ENCODE measurements at regions of chr3 and their contacts with region 1.

Region 1: GRCh38 chr3:39707314-39707909 is 102.0 kb upstream of the MYRIP start:
- DNase-seq: peak; percentile 59
- H3K4me3 Mint-ChIP-seq: no peak overlapping the region
- H3K27ac Mint-ChIP-seq: no peak overlapping the region
- H3K4me1 Mint-ChIP-seq: no peaks in the 10 kb centered on the region
- H3K27me3 Mint-ChIP-seq: peaks cover 5% of the 10 kb centered on the region

Region 2: GRCh38 chr3:39879581-39879980 is 172.2 kb after region 1 on chr3:
- intact Hi-C with region 1: no loop called
- DNase-seq: no peak
- H3K4me3 Mint-ChIP-seq: no peak overlapping the region
- H3K27ac Mint-ChIP-seq: no peak overlapping the region
- H3K4me1 Mint-ChIP-seq: no peaks in the 10 kb centered on the region
- H3K27me3 Mint-ChIP-seq: no peaks in the 10 kb centered on the region

Region 3: DNA sequence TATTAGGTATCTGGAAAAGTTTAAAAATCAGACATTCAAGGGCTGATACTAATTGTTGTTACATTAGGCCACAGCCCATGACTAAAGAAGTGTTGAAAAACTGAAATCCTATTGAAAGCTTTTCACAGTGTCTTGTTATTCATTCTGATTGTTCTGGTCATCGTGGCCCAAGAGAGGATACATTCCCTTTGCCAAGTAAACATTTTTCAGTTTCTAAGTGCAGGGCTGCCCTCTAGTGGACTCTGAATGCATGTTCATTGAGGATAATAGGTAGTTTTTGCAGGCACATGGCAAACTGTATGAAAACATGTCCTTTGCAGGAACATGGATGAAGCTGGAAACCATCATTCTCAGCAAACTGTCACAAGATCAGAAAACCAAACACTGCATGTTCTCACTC is 283.1 kb after region 1 on chr3:
- intact Hi-C with region 1: loop called (anchors 1 kb)
- DNase-seq: peak; percentile 70
- H3K4me3 Mint-ChIP-seq: no peak overlapping the region
- H3K27ac Mint-ChIP-seq: no peak overlapping the region
- H3K4me1 Mint-ChIP-seq: no peaks in the 10 kb centered on the region
- H3K27me3 Mint-ChIP-seq: no peaks in the 10 kb centered on the region

Region 4: GRCh38 chr3:40179016-40179415 is 471.6 kb after region 1 on chr3:
- intact Hi-C with region 1: loop called (anchors 5 kb)
- DNase-seq: peak; percentile 83
- H3K4me3 Mint-ChIP-seq: no peak overlapping the region
- H3K27ac Mint-ChIP-seq: no peak overlapping the region
- H3K4me1 Mint-ChIP-seq: no peaks in the 10 kb centered on the region
- H3K27me3 Mint-ChIP-seq: peaks cover under 1% of the 10 kb centered on the region

Region 5: GRCh38 chr3:40317061-40317855 is 609.8 kb after region 1 on chr3:
- intact Hi-C with region 1: loop called (anchors 5 kb)
- DNase-seq: peak; percentile 83
- H3K4me3 Mint-ChIP-seq: no peak overlapping the region
- H3K27ac Mint-ChIP-seq: no peak overlapping the region
- H3K4me1 Mint-ChIP-seq: peaks cover 4% of the 10 kb centered on the region
- H3K27me3 Mint-ChIP-seq: peaks cover 6% of the 10 kb centered on the region